ENCODE measurements at regions of chr11 and their contacts with region 1.

Region 1: DNA sequence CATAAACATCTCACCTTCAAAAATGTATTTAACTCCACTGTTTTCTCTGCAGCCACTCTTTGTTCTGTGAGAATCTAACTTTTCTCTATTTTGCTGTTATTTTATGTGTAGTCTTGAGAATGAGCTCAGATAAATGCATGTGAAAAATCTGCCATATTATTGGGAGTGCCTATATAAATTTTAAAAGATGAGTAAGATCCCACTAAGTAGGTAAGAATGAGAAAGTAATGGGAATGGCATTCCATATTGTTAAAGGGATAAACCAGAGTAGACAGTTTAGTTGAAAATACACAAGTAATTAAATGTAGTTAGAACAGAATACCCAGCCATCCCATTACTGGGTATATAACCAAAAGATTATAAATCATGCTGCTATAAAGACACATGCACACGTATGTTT is 817.2 kb downstream of the FAM181B start:
- DNase-seq: no peak
- ATAC-seq: no peak
- H3K4me3 ChIP-seq: no peak overlapping the region
- H3K4me3 Mint-ChIP-seq: no peak overlapping the region
- H3K27ac ChIP-seq: no peak overlapping the region
- H3K27ac Mint-ChIP-seq: no peak overlapping the region
- H3K4me1 ChIP-seq: no peaks in the 10 kb centered on the region
- H3K4me1 Mint-ChIP-seq: no peaks in the 10 kb centered on the region
- H3K27me3 ChIP-seq: no peaks in the 10 kb centered on the region
- H3K27me3 Mint-ChIP-seq: no peaks in the 10 kb centered on the region
- CTCF ChIP-seq: no peak

Region 2: GRCh38 chr11:81899156-81899555 is 17.3 kb before region 1 on chr11:
- CTCF ChIA-PET with region 1: no interaction called
- POLR2A ChIA-PET with region 1: no interaction called
- intact Hi-C with region 1: loop called in 1 of 2 experiments (anchors 1 kb)
- DNase-seq: no peak
- ATAC-seq: no peak
- H3K4me3 ChIP-seq: no peak overlapping the region
- H3K4me3 Mint-ChIP-seq: no peak overlapping the region
- H3K27ac ChIP-seq: no peak overlapping the region
- H3K27ac Mint-ChIP-seq: no peak overlapping the region
- H3K4me1 ChIP-seq: no peaks in the 10 kb centered on the region
- H3K4me1 Mint-ChIP-seq: no peaks in the 10 kb centered on the region
- H3K27me3 ChIP-seq: no peaks in the 10 kb centered on the region
- H3K27me3 Mint-ChIP-seq: no peaks in the 10 kb centered on the region
- CTCF ChIP-seq: no peak

Region 3: GRCh38 chr11:81995889-81996288 is 79.4 kb after region 1 on chr11:
- CTCF ChIA-PET with region 1: no interaction called
- POLR2A ChIA-PET with region 1: no interaction called
- intact Hi-C with region 1: no loop called
- DNase-seq: no peak
- ATAC-seq: no peak
- H3K4me3 ChIP-seq: no peak overlapping the region
- H3K4me3 Mint-ChIP-seq: no peak overlapping the region
- H3K27ac ChIP-seq: no peak overlapping the region
- H3K27ac Mint-ChIP-seq: no peak overlapping the region
- H3K4me1 ChIP-seq: no peaks in the 10 kb centered on the region
- H3K4me1 Mint-ChIP-seq: no peaks in the 10 kb centered on the region
- H3K27me3 ChIP-seq: no peaks in the 10 kb centered on the region
- H3K27me3 Mint-ChIP-seq: no peaks in the 10 kb centered on the region
- CTCF ChIP-seq: no peak

Measured in CD4-positive, alpha-beta T cell (primary cell).